Cardiac septum (tissue), 1 donor: ENCODE measurements at regions of chr11 and their contacts with region 1.

Region 1: DNA sequence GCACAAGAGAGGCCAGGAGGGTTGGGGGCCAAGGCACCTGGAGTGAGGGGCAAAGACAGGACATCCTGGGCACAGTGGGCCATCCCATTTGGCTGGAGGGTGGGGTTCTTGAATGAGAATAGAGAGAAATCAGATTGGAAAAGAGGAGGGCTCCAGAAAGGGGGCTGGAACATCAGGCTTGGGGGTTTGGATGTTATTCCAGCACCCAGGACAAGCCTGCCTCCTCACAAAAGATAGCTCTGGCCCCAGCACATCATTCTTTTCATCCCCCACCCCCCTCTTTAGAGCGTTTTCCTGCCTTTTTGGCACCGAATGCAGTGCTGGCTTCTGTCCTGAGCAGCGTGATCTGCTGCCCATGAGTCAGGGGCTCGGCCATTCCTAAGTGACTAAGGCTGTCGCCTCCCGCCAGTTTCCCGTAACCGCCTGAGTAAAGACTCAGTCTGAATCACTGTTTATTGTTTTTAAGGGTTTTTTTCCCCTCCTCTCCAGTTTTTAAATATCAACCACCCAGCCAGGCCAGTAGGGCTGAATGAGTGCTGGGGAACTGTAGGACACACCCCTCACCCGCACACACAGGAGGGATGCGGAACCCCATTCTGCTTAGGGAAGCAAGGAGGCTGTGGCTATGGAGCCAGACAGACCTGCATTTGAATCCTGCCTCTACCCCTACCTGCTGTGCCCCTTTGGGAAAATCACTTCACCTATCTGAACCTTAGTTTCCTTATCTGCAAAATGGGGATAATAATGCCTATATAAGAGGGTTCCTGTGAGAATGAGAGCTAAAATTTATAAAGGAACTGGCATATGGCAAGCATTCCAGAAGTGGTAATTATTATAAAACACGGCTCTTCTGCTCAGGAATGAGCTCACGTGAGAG is 32.4 kb upstream of the NAV2 start:
- DNase-seq: peak; percentile 92

Region 2: DNA sequence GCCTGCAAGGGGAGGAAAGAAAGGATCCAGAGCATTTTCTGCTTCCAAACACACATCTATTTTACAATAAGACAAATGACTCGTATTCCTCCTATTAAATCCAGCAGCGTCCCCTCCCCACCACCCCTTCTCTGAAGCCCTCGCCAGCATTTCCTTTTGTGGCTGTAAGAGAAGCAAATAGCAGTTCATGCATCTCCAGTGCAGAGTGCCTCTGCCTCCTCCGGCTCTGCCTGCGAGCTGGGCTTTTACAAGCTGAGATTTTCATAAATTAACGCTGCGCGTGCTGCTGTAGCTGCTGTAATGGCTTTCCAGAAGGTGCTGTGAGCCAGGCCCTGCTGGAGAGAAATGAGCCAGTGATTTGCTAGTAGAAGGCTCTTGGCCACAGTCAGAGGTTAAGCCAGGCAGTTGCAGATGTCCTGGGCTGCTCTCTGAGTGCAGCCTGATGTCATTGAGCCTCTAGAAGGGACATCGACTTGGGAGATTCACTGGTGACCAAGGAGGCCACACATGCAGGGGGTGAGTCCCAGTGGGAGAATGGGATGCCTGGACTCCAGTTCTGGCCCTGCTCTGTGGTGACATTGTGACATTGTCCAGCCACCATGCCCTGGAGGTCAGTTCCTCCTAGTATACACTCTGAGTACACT is 102.1 kb before region 1 on chr11:
- intact Hi-C with region 1: loop called (anchors 5 kb)
- DNase-seq: no peak

Region 3: DNA sequence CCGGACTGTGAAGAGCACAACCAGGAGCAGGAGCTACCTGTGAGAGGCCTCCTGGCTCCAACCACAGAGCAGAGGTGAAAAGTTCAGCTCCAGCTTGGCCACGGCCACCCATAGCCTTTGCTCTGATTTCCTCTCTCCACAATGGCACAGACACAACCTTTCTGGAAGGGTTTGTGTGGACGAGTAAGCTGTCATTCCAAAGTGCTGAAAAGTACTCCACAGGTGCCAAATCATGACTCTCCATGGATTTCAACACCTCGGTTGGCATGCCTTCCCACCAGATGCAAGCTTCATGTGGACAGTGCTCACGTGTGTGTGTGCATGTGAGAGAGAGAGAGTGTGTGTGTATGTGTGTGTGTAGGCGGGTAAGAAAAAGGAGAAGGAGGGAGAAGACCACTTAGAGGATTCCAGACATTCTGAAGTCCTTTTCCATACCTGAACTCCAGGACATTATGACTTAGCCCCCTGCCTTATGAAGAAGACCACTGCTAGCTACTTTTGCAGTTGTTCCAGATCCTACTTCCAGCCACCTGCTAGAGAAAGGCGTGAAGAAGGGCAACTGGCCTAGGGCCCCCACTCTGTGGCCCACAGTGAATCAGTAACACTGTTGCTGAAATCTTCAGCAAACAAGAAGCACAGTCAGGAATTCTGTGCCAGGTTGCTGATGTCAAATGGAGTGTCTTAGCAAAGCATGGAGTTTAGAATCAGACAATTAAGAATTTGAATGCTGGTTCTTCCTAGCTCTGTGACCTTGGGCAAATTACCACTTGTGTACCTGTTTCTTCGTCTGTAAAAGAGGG is 18.5 kb after region 1 on chr11:
- intact Hi-C with region 1: loop called (anchors 2 kb)
- DNase-seq: no peak

Region 4: GRCh38 chr11:19712281-19713220 is 32.4 kb after region 1 on chr11 and contains the start of gene NAV2:
- intact Hi-C with region 1: loop called (anchors 2 kb)
- DNase-seq: peak; percentile 95
- total RNA-seq, gene NAV2: 50.8 TPM